ENCODE measurements at regions of chr22 and their contacts with region 1.

Region 1: DNA sequence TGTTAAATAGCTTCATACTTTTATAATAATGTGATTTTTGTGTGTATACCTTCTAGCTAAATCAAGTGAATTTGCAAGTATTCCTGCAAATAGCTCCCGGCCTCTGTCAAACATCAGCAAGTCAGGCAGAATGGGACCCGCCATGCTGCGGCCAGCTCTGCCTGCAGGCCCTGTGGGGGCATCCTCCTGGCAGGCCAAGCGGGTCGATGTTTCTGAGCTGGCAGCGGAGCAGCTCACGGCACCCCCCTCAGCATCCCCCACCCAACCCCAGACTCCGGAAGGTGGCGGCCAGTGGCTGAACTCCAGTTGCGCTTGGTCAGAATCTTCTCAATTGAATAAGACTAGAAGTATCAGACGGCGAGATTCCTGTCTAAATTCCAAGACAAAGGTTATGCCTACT is 19.3 kb downstream of the GTSE1 start:
- DNase-seq: no peak
- H3K4me3 ChIP-seq: no peak overlapping the region
- H3K27ac ChIP-seq: no peak overlapping the region
- H3K4me1 ChIP-seq: no peaks in the 10 kb centered on the region
- H3K27me3 ChIP-seq: no peaks in the 10 kb centered on the region
- CTCF ChIP-seq: no peak
- POLR2A ChIP-seq: no peak

Region 2: DNA sequence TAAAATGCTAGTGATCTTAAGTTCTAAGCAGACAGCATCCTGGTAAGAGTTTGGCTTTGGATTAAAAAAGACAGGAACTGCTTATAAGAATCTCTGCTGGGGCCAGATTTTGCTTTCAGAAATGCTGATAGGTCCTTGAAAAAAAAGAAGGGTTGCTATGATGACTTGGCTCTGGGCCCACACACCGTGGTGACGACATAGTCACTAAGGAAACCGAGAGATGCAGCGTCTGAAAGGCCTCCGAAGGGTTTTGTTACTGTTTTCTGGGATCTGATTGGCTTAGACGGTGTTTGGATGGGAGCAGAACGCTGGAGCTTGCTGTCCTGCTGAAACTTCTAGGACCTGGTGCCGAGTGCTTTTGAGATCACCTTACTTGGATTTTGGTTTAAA is 997.8 kb before region 1 on chr22:
- intact Hi-C with region 1: no loop called
- DNase-seq: peak; percentile 69 to 72
- H3K4me3 ChIP-seq: no peak overlapping the region
- H3K27ac ChIP-seq: peak overlapping the region; percentile 66 to 78 (median 69)
- H3K4me1 ChIP-seq: peaks cover 5 to 17% of the 10 kb centered on the region in 2 donors
- H3K27me3 ChIP-seq: no peaks in the 10 kb centered on the region
- CTCF ChIP-seq: no peak
- POLR2A ChIP-seq: no peak

Region 3: DNA sequence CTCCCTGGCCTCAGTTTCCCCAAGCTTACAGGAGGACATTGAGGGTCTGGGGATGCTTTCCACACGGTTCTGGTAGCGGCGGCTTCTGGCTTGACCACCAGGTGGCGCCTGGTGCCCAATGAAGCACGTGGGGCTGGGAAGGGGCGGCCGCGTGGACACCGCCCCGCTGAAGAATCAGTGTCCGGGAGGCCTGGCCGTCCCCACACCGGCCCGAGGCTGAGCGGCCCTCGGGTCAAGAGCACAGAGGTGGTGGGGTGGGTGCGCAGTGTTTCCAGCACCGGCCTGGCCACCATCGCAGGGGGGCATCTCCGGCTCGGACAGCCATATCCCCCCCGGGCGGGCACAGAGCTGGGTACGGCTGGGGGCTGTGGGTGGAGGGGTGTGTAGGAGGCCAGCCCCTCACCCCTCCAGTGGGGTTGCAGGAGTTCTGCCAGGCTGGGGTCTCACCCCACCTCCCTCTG is 193.4 kb before region 1 on chr22:
- intact Hi-C with region 1: loop called (anchors 2 kb)
- DNase-seq: peak; percentile 65 to 71
- H3K4me3 ChIP-seq: no peak overlapping the region
- H3K27ac ChIP-seq: no peak overlapping the region
- H3K4me1 ChIP-seq: peaks cover 0 to 4% of the 10 kb centered on the region in 2 donors
- H3K27me3 ChIP-seq: no peaks in the 10 kb centered on the region
- CTCF ChIP-seq: peak; percentile 81 to 95 (median 88)
- POLR2A ChIP-seq: no peak

Measured in thyroid gland (tissue), 4 donors.